Stomach (tissue), 19 donors: ENCODE measurements at regions of chr20 and their contacts with region 1.

Region 1: GRCh38 chr20:9978397-9979004 is 56.3 kb upstream of the ANKEF1 start:
- DNase-seq: peak in 1 of 2 donors; percentile 91
- H3K4me3 ChIP-seq: no peak overlapping the region
- H3K27ac ChIP-seq: no peak overlapping the region
- H3K4me1 ChIP-seq: peaks cover 0 to 6% (median 0%) of the 10 kb centered on the region in 4 donors
- H3K27me3 ChIP-seq: no peaks in the 10 kb centered on the region
- CTCF ChIP-seq: peak in 5 of 7 experiments; percentile 45 to 85 (median 71)
- EP300 ChIP-seq: no peak
- POLR2A ChIP-seq: no peak

Region 2: GRCh38 chr20:10090588-10091166 is 112.2 kb after region 1 on chr20:
- intact Hi-C with region 1: loop called (anchors 5 kb)
- DNase-seq: peak; percentile 64 to 85
- H3K4me3 ChIP-seq: no peak overlapping the region
- H3K27ac ChIP-seq: no peak overlapping the region
- H3K4me1 ChIP-seq: peaks cover 0 to 8% (median 2%) of the 10 kb centered on the region in 4 donors
- H3K27me3 ChIP-seq: no peaks in the 10 kb centered on the region
- CTCF ChIP-seq: peak in 5 of 7 experiments; percentile 46 to 71 (median 64)
- EP300 ChIP-seq: no peak
- POLR2A ChIP-seq: no peak

Region 3: DNA sequence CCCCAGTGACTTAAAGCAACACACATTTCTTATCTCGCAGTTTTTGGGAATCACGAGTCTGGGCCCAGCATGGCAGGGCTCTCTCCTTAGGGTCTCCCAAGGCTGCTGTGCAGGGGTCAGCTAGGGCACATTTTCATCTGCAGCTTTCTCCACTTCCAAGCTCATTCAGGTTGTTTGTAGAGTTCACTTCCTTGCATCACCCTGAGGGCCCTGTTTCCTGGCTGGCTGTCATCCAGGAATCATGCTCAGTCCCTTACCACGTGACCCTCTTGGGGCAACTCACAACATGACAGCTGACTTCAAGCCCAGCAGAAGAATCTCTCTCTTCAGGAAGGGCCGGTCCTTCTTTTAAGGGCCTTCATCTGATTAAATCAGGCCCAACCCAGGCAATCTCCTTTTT is 261.5 kb after region 1 on chr20:
- intact Hi-C with region 1: no loop called
- DNase-seq: peak; percentile 38 to 62
- H3K4me3 ChIP-seq: no peak overlapping the region
- H3K27ac ChIP-seq: no peak overlapping the region
- H3K4me1 ChIP-seq: no peaks in the 10 kb centered on the region
- H3K27me3 ChIP-seq: no peaks in the 10 kb centered on the region
- CTCF ChIP-seq: no peak
- EP300 ChIP-seq: no peak
- POLR2A ChIP-seq: no peak

Region 4: DNA sequence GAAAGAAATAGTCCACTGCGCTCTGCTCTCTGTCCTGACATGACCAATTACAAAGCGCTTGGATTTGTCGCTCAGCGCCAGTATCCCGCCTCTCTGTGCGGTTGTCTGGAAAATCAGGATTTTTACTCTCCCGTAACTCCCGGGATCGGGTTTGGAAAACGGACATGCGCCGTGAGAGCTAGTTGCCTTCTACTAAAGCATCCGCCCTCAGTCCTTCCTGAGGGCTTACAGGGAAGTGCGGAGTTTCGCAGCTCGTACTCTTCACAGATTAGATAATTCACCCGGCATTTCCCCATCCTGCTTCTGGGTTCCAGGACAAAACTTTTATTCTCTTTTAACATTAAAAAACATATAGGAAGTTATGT is 455.9 kb after region 1 on chr20:
- intact Hi-C with region 1: loop called (anchors 10 kb)
- DNase-seq: peak; percentile 94 to 98
- H3K4me3 ChIP-seq: peak overlapping the region; percentile 80 to 92 (median 86)
- H3K27ac ChIP-seq: peak overlapping the region; percentile 91 to 95 (median 94)
- H3K4me1 ChIP-seq: peaks cover 16 to 52% (median 35%) of the 10 kb centered on the region in 4 donors
- H3K27me3 ChIP-seq: no peaks in the 10 kb centered on the region
- CTCF ChIP-seq: no peak
- EP300 ChIP-seq: no peak
- POLR2A ChIP-seq: peak in 2 of 4 donors; percentile 84 to 92